Activated CD4-positive, alpha-beta T cell treated with anti-CD3 and anti-CD28 coated beads, Interleukin-2, amount 10 ng/mL, durations not matched to agents 24 days and 14 days (primary cell): ENCODE measurements at regions of chr3 and their contacts with region 1.

Region 1: GRCh38 chr3:53045518-53046170 is at the start of gene SFMBT1:
- DNase-seq: peak; percentile 89
- H3K4me3 Mint-ChIP-seq: peak within 1 kb of the TSS; percentile 95
- H3K27ac Mint-ChIP-seq: peak within 1 kb of the TSS; percentile 95
- H3K4me1 Mint-ChIP-seq: peaks cover 28% of the 10 kb centered on the region
- H3K27me3 Mint-ChIP-seq: peaks cover 2% of the 10 kb centered on the region
- total RNA-seq, gene SFMBT1: 28.6 and 28.8 TPM in 2 replicates

Region 2: DNA sequence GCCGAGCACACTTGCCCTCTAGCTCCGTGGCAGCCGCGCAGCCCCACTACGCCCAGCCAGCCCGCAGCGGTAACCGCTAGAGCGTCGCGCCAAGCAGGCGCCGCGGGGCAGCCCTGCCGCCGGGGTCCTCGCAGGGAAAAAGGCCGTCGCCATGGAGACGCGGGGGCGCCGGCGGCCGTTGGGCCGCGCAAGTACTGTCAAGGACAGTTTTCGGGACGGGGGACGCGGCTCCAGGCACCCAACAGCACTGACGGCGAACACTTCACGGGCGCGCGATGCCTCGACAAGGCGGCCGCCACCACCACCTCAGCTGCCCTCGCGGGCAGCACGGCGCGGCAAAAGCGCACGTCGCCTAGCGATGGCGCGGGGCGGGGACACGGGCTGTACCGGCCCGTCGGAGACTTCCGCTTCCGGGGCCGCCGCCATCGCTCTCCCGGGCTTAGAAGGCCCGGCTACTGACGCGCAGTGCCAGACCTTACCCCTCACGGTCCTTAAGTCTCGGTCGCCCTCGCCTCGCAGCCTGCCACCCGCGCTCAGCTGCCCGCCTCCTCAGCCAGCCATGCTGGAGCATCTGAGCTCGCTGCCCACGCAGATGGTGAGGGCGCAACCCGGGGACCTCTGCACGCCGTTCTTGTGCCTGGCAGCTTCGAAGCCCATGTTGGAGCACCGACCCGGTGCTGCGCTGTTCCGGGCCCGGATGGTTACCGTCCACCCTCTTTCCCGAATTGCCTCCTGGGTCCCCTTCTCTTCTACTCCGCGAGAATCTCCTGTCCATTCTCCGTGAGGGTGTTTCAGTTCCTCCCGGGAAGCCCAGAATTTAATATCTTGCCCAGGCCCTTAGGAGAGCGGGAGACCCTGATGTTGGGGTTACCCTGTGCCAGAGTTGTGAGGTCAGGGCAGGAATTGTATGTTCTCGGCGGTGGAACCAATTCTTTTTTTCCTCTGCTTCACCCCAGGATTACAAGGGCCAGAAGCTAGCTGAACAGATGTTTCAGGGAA is 339.7 kb before region 1 on chr3 and contains the starts of genes GLT8D1 and SPCS1:
- intact Hi-C with region 1: loop called (anchors 10 kb)
- DNase-seq: peak; percentile 96
- H3K4me3 Mint-ChIP-seq: peak within 1 kb of the TSS; percentile 94
- H3K27ac Mint-ChIP-seq: peak within 1 kb of the TSS; percentile 95
- H3K4me1 Mint-ChIP-seq: peaks cover 22% of the 10 kb centered on the region
- H3K27me3 Mint-ChIP-seq: no peaks in the 10 kb centered on the region
- total RNA-seq, gene GLT8D1: 38.7 and 39.0 TPM in 2 replicates
- total RNA-seq, gene SPCS1: 134 and 135 TPM in 2 replicates

Region 3: DNA sequence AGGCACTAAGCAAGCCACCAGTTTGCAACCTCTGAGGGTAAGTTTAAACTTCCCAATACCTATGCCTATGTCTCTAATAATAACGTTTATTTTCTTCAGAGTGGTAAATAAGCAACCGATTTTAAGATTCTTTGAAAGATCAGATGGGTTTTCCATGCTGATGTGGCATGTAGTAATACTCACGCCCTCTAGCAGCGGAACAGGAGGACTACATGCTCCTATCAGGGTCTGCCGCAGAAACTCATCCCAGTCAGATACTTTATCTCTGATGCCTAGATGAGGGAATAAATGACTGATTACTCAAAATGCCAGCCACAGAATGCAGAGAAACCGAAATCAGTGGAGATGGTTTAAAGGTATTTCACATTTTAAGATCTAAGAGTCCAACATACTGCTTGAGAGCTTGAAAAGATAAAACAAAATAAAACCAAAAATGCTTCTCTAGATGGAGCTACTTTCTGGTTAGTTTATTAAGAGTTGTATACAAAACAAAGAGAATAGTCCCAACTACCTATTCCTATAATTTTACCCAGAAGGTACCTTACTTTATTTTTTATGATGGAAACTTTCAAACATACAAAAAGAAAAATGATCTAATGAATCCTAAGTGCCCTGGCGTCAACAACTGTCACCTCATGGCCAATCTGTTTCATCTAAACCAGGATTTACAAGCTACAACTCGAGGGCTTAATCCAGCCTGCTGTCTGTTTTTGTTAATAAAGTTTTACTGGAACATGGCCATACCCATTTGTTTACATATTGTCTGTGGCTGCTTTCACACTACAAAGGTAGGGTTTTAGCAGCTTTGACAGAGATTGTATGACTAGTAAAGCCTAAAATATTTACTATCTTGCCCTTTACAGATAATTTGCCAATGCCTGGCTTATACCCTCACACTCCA is 110.8 kb before region 1 on chr3:
- intact Hi-C with region 1: loop called (anchors 5 kb)
- DNase-seq: peak; percentile 84
- H3K4me3 Mint-ChIP-seq: no peak overlapping the region
- H3K27ac Mint-ChIP-seq: peak overlapping the region; percentile 9
- H3K4me1 Mint-ChIP-seq: peaks cover 8% of the 10 kb centered on the region
- H3K27me3 Mint-ChIP-seq: no peaks in the 10 kb centered on the region

Region 4: DNA sequence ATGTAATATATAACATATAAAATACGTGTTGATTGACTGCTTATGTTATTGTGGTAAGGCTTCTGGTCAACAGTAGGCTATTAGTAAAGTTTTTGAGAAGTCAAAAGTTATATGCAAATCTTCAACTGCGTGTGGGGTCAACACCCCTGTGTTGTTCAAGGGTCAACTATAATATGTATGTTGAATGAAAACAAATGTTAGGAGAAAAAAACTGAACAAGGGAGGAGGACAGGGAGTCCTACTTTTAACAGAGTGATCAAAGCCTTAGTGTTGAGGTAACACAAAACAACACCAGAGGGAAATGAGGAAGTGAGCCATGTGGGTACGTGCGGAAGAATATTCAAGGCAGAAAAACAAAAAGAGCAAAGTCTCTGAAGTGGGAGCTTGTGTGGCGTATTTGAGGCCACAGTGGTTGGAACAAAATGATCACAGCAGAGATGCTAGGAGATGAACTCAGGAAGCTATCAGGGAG is 62.3 kb before region 1 on chr3:
- intact Hi-C with region 1: loop called (anchors 1 kb)
- DNase-seq: peak; percentile 92
- H3K4me3 Mint-ChIP-seq: peak overlapping the region; percentile 68
- H3K27ac Mint-ChIP-seq: peak overlapping the region; percentile 84
- H3K4me1 Mint-ChIP-seq: peaks cover 29% of the 10 kb centered on the region
- H3K27me3 Mint-ChIP-seq: no peaks in the 10 kb centered on the region

Region 5: DNA sequence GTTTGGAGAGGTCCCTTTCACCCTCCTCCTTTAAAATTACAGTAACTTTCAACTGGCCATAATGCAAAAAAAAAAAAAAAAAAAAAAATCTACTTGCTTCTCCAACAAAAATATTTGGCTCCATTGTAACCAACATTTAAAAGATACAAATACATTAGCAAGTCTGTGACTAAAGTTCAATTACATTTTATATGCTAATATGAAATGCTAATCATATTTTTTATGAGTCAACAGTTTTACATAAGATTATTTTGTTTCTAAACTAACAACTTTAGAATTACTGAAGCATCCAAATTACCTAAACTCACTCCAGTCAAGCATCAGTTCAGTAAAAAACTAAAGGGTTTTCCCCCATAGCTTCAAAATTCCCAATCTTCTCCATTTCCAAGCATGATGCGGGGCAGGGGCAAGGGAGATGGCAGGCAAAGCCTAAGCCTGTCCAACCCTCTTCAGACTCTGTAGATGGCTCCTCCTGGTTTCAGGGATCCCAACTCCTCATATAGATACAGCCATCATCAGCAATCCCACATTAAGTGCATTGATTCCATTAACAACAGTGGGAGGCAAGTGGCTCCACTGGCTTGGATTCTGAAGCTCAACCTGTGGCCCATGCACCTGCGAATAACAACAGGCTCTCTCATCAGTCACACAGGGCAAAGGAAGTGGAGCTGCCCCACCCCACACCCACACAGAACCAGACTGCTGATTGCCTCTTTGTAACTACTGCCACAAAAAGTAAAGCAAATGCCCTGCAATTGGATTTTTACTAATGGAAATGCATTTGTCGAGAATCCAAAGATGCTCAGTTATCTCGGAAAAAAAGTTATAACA is 14.8 kb before region 1 on chr3:
- intact Hi-C with region 1: loop called (anchors 1 kb)
- DNase-seq: peak; percentile 78
- H3K4me3 Mint-ChIP-seq: peak overlapping the region; percentile 6
- H3K27ac Mint-ChIP-seq: peak overlapping the region; percentile 1
- H3K4me1 Mint-ChIP-seq: peaks cover 20% of the 10 kb centered on the region
- H3K27me3 Mint-ChIP-seq: no peaks in the 10 kb centered on the region

Region 6: GRCh38 chr3:53072653-53073552 is 27.3 kb after region 1 on chr3:
- intact Hi-C with region 1: loop called (anchors 1 kb)
- DNase-seq: peak; percentile 97
- H3K4me3 Mint-ChIP-seq: peak overlapping the region; percentile 92
- H3K27ac Mint-ChIP-seq: peak overlapping the region; percentile 94
- H3K4me1 Mint-ChIP-seq: peaks cover 18% of the 10 kb centered on the region
- H3K27me3 Mint-ChIP-seq: no peaks in the 10 kb centered on the region

Region 7: GRCh38 chr3:53083521-53083920 is 37.9 kb after region 1 on chr3:
- intact Hi-C with region 1: no loop called
- DNase-seq: no peak
- H3K4me3 Mint-ChIP-seq: no peak overlapping the region
- H3K27ac Mint-ChIP-seq: no peak overlapping the region
- H3K4me1 Mint-ChIP-seq: peaks cover 1% of the 10 kb centered on the region
- H3K27me3 Mint-ChIP-seq: no peaks in the 10 kb centered on the region

Region 8: GRCh38 chr3:53114011-53114400 is 68.4 kb after region 1 on chr3:
- intact Hi-C with region 1: loop called (anchors 2 kb)
- DNase-seq: peak; percentile 95
- H3K4me3 Mint-ChIP-seq: no peak overlapping the region
- H3K27ac Mint-ChIP-seq: no peak overlapping the region
- H3K4me1 Mint-ChIP-seq: peaks cover 15% of the 10 kb centered on the region
- H3K27me3 Mint-ChIP-seq: no peaks in the 10 kb centered on the region